Activated naive CD4-positive, alpha-beta T cell treated with anti-CD3 and anti-CD28 coated beads, Interleukin-2, amount 10 ng/mL, durations not matched to agents 7 days and 5 days (primary cell): ENCODE measurements at regions of chr11 and their contacts with region 1.

Region 1: DNA sequence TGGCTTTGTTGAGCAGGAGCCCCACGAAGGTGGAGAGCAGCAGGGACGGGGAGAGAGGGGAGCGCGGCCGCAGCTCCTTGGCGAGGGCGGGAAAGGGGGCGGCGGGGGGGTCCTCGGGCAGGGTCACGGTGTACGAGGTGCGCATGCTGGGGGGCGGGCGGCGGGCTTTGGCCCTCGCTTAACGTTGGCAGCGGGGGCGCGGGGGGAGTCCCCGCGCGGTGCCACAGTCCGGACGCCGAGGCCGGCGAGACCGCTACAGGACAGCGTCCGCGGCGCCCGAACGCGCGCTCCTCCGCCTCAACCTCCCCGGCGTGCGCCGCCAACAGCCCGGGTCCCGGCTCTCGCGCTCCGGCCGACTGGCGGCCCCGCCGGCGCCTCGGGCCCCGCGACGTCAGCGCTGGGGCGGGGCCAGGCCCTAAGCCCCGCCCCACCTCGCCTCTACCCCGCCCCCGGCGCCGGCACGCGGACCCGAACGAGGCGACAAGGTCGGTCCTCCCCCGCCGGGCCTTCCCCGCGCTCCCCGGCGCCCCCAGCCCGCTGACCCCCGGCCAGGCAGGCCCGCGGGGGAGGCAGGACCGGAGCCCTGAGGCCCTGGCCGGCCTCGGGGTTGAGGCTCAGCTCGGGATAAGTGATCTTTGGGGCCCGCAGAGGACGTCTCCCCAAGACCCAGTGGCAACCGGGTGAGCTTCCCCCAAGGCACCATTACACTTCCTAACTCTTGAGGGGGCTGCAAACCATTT is 17.5 kb downstream of the USP2 start:
- DNase-seq: peak; percentile 67
- H3K4me3 Mint-ChIP-seq: peak overlapping the region; percentile 66
- H3K27ac Mint-ChIP-seq: no peak overlapping the region
- H3K4me1 Mint-ChIP-seq: peaks cover 17% of the 10 kb centered on the region
- H3K27me3 Mint-ChIP-seq: peaks cover 90% of the 10 kb centered on the region

Region 2: DNA sequence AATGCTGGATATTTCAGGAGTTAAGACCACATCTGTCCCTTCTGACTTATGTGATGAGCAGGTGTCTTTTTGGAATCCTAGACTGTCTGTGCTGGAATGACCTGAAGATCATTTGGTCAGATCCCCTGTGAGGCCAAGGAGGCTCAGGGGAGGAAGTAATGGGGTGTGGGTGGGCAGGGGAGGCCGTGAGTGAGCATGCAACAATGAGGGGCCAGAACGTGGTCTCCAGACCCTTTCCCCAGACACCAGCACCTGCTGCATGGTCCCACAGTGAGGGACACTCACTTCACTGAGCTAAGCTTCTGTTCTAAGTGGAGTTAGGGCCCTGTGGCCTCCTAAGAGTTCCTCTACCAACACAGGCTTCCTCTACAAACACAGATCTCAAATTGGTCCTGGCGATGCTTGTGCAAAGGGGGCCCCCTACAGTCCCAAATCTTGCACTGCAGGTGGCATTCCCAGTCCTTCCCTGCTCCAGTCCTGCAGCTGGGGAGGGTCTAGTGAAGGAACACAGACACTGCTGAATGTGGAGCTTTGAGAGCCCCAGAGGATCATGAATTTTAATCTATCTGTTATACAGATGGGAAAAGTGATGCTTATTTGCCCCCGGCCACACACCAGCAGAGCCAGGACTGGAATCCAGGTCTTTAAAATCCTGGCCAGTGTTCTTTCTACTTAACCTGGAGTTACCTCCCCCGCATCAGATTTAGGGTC is 10.1 kb after region 1 on chr11:
- CTCF ChIA-PET with region 1: interaction called, 184 read pairs
- DNase-seq: peak; percentile 63
- H3K4me3 Mint-ChIP-seq: no peak overlapping the region
- H3K27ac Mint-ChIP-seq: no peak overlapping the region
- H3K4me1 Mint-ChIP-seq: peaks cover 9% of the 10 kb centered on the region
- H3K27me3 Mint-ChIP-seq: peaks cover 37% of the 10 kb centered on the region